ENCODE measurements at regions of chr3 and their contacts with region 1.

Region 1: DNA sequence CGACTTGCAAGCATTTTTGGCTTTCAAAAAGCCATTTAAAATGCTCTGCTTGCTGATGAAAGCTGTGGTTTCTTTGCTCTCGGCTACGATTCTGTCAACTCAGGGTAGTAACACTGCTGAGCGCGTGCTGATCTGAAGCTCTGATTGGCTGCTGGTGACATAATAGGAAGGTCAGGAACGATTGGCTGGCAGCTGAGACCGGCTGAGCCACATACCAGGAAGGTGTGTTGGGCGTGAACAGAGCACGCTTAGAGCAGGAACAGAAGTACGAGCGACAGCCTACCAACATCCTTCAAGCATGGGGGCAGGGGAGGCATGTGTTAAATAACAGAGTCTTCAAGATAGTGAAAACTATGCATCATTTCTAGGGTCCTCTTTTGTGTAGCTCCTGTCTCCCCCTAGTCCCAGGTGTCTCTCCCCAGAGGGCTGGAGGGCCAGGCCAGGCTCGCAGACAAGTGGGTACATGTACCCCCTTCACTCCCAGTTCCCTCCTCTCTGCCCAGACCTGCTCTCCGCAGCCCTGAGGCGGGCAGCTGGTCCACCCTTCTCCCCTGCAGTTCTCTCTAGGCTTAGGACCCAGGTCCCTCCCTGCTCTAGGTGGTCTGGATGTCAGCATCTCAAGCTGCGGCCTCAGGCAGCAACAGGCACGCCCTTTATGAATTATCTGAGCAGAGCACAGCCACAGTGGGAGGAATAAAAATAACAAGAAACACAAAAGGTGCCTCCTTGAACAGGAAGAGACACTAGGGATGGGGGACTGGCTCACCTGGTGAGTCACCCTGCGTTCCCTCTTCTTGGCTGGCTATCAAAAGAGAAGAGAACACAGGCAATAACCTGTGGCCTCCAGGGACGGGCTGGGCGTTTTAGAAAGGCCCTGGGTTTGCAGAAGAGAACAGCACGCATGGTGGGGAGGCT is 76.0 kb downstream of the TAMM41 start:
- DNase-seq: peak; percentile 99
- H3K4me3 ChIP-seq: peak overlapping the region; percentile 1 to 36 (median 14)
- H3K27ac ChIP-seq: peak overlapping the region; percentile 90
- H3K4me1 ChIP-seq: peaks cover 33% of the 10 kb centered on the region
- H3K27me3 ChIP-seq: no peaks in the 10 kb centered on the region
- CTCF ChIP-seq: no peak

Region 2: DNA sequence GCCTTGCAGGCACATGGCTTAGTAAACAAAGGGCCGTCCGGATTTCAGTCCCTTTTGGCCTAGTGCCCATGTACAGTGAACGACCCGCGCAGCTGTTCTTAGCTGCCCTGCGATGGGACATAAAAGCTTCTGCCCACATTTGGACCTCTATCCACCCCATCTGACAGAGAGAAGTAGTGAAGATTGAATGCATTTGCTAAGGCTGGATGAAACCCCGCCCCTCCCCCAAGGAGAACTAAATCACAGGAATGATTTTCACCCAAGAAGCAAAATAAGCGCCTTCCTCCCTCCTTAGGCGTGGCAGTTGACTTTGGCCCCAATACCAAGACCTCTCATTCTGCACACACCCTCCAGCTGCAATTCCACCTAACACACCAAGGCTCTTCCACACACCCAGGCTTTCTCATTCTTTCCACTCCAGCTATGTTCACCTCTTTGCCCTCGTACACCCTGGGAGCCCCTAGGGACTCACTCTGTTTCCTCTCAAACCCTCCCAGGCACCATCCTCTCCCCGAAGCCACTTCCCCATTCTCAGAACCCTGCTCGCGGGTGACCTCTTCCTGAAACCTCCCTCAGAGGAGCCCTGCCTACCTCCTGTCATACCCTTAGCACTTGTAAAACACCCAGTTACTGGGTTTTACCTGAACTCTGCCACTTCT is 630.6 kb before region 1 on chr3:
- CTCF ChIA-PET with region 1: no interaction called
- dilution Hi-C with region 1: no loop called
- in situ Hi-C with region 1: no loop called
- intact Hi-C with region 1: loop called (anchors 10 kb)
- DNase-seq: peak; percentile 19
- H3K4me3 ChIP-seq: no peak overlapping the region
- H3K27ac ChIP-seq: no peak overlapping the region
- H3K4me1 ChIP-seq: peaks cover 26% of the 10 kb centered on the region
- H3K27me3 ChIP-seq: no peaks in the 10 kb centered on the region
- CTCF ChIP-seq: no peak

Region 3: GRCh38 chr3:11601446-11602238 is 169.1 kb before region 1 on chr3:
- CTCF ChIA-PET with region 1: no interaction called
- dilution Hi-C with region 1: no loop called
- in situ Hi-C with region 1: no loop called
- intact Hi-C with region 1: loop called (anchors 1 kb)
- DNase-seq: no peak
- H3K4me3 ChIP-seq: no peak overlapping the region
- H3K27ac ChIP-seq: no peak overlapping the region
- H3K4me1 ChIP-seq: peaks cover 31% of the 10 kb centered on the region
- H3K27me3 ChIP-seq: no peaks in the 10 kb centered on the region
- CTCF ChIP-seq: no peak

Region 4: DNA sequence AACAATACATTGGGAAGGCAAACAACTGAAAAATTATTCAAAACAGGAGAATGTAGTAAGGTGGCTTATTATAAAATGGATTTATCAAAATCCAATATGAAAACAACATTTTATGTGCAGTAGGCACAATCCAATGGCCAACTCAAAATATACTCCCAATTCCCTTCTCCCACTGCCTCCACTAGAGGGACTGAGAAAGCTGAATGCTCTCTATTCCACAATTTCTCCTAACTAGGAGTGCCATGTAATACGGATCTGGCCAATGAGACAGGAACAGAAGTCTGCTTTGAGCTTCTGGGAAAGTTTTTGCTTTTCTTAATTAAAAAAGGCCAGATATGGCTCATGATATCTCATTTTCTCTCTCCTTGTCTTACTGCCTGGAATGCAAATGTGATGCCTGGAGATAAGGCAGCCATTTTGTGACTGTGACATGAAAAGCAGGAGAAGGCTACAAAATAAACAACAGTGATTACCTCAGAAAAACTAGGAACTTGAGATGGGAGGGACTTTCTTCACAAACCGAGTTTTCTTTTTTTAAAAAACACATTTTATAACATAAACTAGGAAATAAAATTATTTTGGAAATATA is 108.2 kb before region 1 on chr3:
- CTCF ChIA-PET with region 1: no interaction called
- dilution Hi-C with region 1: no loop called
- in situ Hi-C with region 1: no loop called
- intact Hi-C with region 1: loop called (anchors 5 kb)
- DNase-seq: peak; percentile 29
- H3K4me3 ChIP-seq: no peak overlapping the region
- H3K27ac ChIP-seq: no peak overlapping the region
- H3K4me1 ChIP-seq: peaks cover 12% of the 10 kb centered on the region
- H3K27me3 ChIP-seq: no peaks in the 10 kb centered on the region
- CTCF ChIP-seq: peak; percentile 53 to 69

Region 5: GRCh38 chr3:11835028-11835639 is 64.4 kb after region 1 on chr3:
- CTCF ChIA-PET with region 1: no interaction called
- dilution Hi-C with region 1: no loop called
- in situ Hi-C with region 1: no loop called
- intact Hi-C with region 1: loop called (anchors 1 kb)
- DNase-seq: no peak
- H3K4me3 ChIP-seq: no peak overlapping the region
- H3K27ac ChIP-seq: no peak overlapping the region
- H3K4me1 ChIP-seq: no peaks in the 10 kb centered on the region
- H3K27me3 ChIP-seq: no peaks in the 10 kb centered on the region
- CTCF ChIP-seq: peak; percentile 41 to 44

Measured in mammary epithelial cell (primary cell).